ENCODE measurements at regions of chr12 and their contacts with region 1.

Region 1: GRCh38 chr12:67943226-67943892 is 45.9 kb upstream of the IFNG-AS1 start:
- DNase-seq: peak; percentile 4 to 81 (median 56)
- ATAC-seq: peak; percentile 78
- H3K4me3 ChIP-seq: no peak overlapping the region
- H3K4me3 Mint-ChIP-seq: no peak overlapping the region
- H3K27ac ChIP-seq: no peak overlapping the region
- H3K27ac Mint-ChIP-seq: no peak overlapping the region
- H3K4me1 ChIP-seq: no peaks in the 10 kb centered on the region
- H3K4me1 Mint-ChIP-seq: no peaks in the 10 kb centered on the region
- H3K27me3 ChIP-seq: no peaks in the 10 kb centered on the region
- H3K27me3 Mint-ChIP-seq: peaks cover 4% of the 10 kb centered on the region
- CTCF ChIP-seq: peak; percentile 87

Region 2: GRCh38 chr12:67161322-67161918 is 781.9 kb before region 1 on chr12:
- CTCF ChIA-PET with region 1: no interaction called
- POLR2A ChIA-PET with region 1: no interaction called
- intact Hi-C with region 1: loop called in 1 of 2 experiments (anchors 5 kb)
- DNase-seq: peak in 10 of 14 experiments; percentile 1 to 57 (median 22)
- ATAC-seq: peak; percentile 58
- H3K4me3 ChIP-seq: no peak overlapping the region
- H3K4me3 Mint-ChIP-seq: no peak overlapping the region
- H3K27ac ChIP-seq: no peak overlapping the region
- H3K27ac Mint-ChIP-seq: no peak overlapping the region
- H3K4me1 ChIP-seq: no peaks in the 10 kb centered on the region
- H3K4me1 Mint-ChIP-seq: no peaks in the 10 kb centered on the region
- H3K27me3 ChIP-seq: no peaks in the 10 kb centered on the region
- H3K27me3 Mint-ChIP-seq: no peaks in the 10 kb centered on the region
- CTCF ChIP-seq: peak; percentile 48

Region 3: DNA sequence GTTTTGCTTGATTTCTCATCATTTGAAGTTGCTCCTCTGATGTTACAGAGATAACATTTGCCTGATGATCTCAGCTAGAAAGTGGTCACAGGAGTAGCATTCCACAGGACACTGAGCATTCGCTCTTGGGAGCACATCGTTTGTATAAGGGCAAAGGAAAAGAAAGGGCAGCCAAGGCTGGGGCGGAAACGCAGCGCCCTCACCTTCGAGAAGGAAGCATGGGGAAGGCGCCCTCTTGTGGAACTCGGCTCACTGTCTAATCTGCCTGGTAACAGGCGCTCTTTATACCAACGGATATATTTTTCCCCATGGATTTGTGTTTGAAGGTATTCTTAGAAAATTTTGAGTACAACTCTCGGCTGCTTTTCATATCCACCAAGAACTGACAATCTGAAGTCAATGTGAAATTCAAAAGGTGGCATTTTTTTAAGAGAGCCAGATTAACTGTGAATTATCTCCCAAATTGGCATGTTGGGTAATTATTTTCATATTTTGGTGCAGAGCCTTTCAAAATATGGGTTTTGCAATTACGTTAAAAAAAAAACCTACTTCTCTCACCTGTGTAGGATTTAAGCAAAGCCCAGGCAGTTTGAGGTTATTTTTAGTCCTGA is 501.5 kb before region 1 on chr12:
- CTCF ChIA-PET with region 1: no interaction called
- POLR2A ChIA-PET with region 1: no interaction called
- intact Hi-C with region 1: loop called (anchors 2 to 5 kb)
- DNase-seq: peak; percentile 64 to 87 (median 74)
- ATAC-seq: peak; percentile 96
- H3K4me3 ChIP-seq: no peak overlapping the region
- H3K4me3 Mint-ChIP-seq: peak overlapping the region; percentile 77
- H3K27ac ChIP-seq: no peak overlapping the region
- H3K27ac Mint-ChIP-seq: peak overlapping the region; percentile 10
- H3K4me1 ChIP-seq: peaks cover 14% of the 10 kb centered on the region
- H3K4me1 Mint-ChIP-seq: peaks cover 32% of the 10 kb centered on the region
- H3K27me3 ChIP-seq: no peaks in the 10 kb centered on the region
- H3K27me3 Mint-ChIP-seq: no peaks in the 10 kb centered on the region
- CTCF ChIP-seq: peak; percentile 84

Region 4: DNA sequence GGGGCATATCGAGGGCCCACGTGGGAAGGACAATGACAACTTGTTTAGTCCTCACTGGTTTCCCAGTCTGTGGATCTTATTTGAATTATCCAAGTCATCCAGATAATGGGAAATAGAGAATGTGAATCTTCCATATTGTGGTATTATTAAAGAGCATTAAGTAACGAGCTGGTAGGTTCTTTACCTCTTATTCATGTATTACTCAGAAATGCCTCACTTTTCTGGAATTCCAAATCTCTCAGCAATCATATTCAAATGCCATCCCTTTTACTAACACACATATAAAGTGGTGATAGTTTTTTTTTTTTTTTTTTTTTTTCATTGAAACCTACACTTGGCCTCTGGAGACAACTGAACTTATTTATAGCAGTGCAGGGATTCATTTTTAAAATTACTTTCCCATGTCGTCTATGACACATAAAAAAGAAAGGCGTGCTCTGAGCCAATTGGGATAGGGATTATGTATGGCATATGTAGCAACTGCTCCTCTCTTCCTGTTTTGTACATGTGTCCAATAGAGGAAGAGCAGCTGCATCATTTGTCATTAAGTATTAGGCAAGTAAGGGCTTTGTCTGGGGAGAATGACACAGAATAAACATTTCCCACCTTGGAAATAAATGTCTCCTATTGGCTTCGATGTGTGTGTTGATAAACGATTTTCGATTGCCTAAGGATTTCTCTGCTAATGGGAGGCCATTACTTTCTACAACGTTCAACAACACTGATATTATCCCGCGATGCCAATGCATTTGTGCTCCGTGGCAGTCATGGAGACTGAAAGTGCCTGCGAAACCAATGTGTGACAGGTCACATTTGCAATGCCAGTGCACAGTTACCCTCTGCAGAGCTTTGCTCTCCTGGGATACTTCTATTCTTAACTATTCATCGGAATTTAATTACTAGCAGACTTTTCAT is 32.7 kb before region 1 on chr12:
- CTCF ChIA-PET with region 1: no interaction called
- POLR2A ChIA-PET with region 1: no interaction called
- intact Hi-C with region 1: no loop called
- DNase-seq: no peak
- ATAC-seq: no peak
- H3K4me3 ChIP-seq: no peak overlapping the region
- H3K4me3 Mint-ChIP-seq: no peak overlapping the region
- H3K27ac ChIP-seq: no peak overlapping the region
- H3K27ac Mint-ChIP-seq: no peak overlapping the region
- H3K4me1 ChIP-seq: no peaks in the 10 kb centered on the region
- H3K4me1 Mint-ChIP-seq: no peaks in the 10 kb centered on the region
- H3K27me3 ChIP-seq: no peaks in the 10 kb centered on the region
- H3K27me3 Mint-ChIP-seq: no peaks in the 10 kb centered on the region
- CTCF ChIP-seq: no peak

Measured in CD4-positive, alpha-beta T cell (primary cell).